MCF 10A (cell line): ENCODE measurements at regions of chr20 and their contacts with region 1.

Region 1: DNA sequence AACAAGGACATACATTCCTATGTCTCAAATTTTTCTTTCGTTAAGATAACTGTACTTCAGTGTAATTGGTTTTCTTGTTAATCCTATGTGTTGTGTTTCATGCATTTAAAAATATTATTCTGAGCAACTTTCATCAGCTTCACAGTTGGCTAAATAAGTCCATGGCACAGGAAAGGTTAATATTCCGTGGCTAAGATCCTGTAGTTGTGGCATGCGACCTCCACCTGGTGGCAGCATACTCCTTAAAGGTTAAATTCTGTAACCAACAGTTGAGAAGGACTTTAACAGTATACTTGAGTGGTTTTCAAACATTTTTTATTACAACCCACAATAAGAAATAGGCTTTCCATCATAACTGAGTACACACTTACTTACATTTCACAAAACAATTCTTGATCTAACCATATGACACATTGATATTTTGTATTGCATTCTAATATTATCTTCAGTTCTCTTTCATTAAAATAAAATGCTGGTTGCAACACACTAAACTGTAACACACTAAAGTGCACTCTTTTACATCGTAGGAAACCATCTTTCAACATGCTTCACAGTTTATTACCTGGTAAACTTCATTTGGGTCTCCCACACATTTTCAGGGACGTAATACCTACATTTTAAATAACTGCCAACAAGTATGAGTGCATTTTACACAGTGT is 118.3 kb downstream of the SLX4IP start:
- DNase-seq: peak; percentile 76
- H3K4me3 Mint-ChIP-seq: no peak overlapping the region
- H3K27ac Mint-ChIP-seq: no peak overlapping the region
- H3K4me1 Mint-ChIP-seq: peaks cover 27% of the 10 kb centered on the region
- H3K27me3 Mint-ChIP-seq: no peaks in the 10 kb centered on the region
- CTCF ChIP-seq: peak; percentile 82

Region 2: DNA sequence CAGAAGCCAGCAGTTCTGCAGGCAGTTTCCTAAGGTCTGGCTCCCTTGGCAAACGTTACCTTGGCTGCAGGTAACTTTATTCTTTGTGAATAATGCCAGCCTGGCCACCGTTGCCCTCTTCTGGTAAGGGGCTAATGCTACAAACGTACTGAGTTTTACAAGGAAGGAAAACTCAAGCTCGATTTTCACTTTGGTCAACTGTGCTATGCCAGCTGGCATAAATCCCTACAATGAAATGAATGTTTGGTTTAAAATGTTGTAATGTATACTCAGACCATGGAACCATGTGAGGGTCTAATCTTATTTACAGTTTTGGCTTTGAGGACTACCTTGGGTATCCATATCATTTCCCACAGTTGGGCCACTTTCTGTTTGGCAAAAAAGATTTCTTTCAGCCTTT is 16.9 kb before region 1 on chr20:
- CTCF ChIA-PET with region 1: interaction called, 20 read pairs
- POLR2A ChIA-PET with region 1: interaction called, 5 read pairs
- intact Hi-C with region 1: no loop called
- DNase-seq: peak; percentile 71
- H3K4me3 Mint-ChIP-seq: no peak overlapping the region
- H3K27ac Mint-ChIP-seq: no peak overlapping the region
- H3K4me1 Mint-ChIP-seq: peaks cover 31% of the 10 kb centered on the region
- H3K27me3 Mint-ChIP-seq: no peaks in the 10 kb centered on the region
- CTCF ChIP-seq: peak; percentile 44

Region 3: GRCh38 chr20:10626896-10627295 is 73.4 kb after region 1 on chr20:
- CTCF ChIA-PET with region 1: interaction called, 14 read pairs
- POLR2A ChIA-PET with region 1: interaction called, 20 read pairs
- intact Hi-C with region 1: no loop called
- DNase-seq: peak; percentile 86
- H3K4me3 Mint-ChIP-seq: no peak overlapping the region
- H3K27ac Mint-ChIP-seq: peak overlapping the region; percentile 27
- H3K4me1 Mint-ChIP-seq: peaks cover 25% of the 10 kb centered on the region
- H3K27me3 Mint-ChIP-seq: no peaks in the 10 kb centered on the region
- CTCF ChIP-seq: no peak

Region 4: GRCh38 chr20:10667077-10667401 is 113.6 kb after region 1 on chr20:
- CTCF ChIA-PET with region 1: interaction called, 35 read pairs
- POLR2A ChIA-PET with region 1: interaction called, 60 read pairs
- intact Hi-C with region 1: loop called (anchors 1 kb)
- DNase-seq: peak; percentile 78
- H3K4me3 Mint-ChIP-seq: peak overlapping the region; percentile 33
- H3K27ac Mint-ChIP-seq: peak overlapping the region; percentile 68
- H3K4me1 Mint-ChIP-seq: peaks cover 46% of the 10 kb centered on the region
- H3K27me3 Mint-ChIP-seq: no peaks in the 10 kb centered on the region
- CTCF ChIP-seq: no peak

Region 5: DNA sequence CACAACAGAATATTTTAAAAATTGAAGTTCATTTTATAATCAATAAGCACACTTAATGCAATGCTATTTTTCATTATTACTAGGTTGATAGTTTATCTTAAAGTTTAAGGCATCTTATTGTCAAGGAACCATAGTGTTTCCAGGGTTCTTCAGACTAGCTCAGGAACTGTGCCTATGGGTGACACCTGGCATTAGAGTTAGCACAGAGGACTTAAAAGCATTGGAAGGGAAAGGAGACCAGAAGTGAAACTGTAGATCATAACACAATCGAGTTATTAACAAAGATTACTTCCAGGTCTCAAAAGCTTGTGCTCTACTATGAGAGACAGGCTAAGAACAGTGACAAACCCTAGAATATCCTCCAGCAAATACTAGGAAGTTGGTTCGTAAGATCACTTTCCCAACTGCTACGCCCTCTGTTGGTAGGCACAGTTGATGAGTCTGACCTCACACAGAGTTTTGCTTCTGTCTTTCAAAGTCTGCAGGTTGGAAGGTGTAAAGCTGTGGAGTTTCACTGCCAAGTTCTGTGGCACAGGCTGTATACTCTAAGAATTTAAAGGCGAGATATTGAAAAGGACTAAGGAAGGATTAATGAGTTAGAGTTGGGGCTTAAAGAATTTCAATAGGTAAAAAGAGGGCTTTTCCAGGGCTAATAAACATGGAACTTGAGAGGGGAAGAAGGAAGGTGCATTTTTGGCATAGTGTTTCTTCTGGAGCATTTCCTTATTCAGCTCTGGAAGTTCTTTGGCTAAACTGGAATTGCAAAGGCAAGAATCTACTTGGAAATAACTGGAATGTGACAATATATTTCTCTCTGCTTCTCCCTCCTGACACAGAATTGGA is 651.7 kb after region 1 on chr20:
- CTCF ChIA-PET with region 1: interaction called, 4 read pairs
- POLR2A ChIA-PET with region 1: interaction called, 3 read pairs
- intact Hi-C with region 1: loop called (anchors 5 kb)
- DNase-seq: peak; percentile 81
- H3K4me3 Mint-ChIP-seq: no peak overlapping the region
- H3K27ac Mint-ChIP-seq: no peak overlapping the region
- H3K4me1 Mint-ChIP-seq: peaks cover 33% of the 10 kb centered on the region
- H3K27me3 Mint-ChIP-seq: no peaks in the 10 kb centered on the region
- CTCF ChIP-seq: peak; percentile 58

Region 6: DNA sequence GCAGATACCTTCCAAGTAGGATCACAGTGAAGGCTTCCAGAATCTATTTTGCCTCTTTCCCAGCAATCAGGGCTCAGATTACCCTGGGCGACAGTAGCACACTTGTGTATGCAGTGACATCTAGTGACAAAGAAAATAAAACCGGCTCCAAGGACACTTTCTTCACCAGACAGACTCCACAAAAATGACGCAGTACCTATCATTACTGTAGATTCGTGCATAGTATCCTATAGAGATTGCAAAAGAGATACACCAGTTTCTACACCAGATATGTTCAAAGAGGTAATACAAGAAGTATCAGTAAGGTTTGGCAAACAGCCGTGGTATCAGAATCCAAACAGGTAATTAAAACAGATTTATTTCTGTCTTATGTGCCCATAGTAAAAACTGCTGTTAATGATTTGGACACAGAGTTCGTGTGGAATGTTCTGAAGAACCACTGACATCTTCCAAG is 720.7 kb after region 1 on chr20:
- CTCF ChIA-PET with region 1: interaction called, 6 read pairs
- POLR2A ChIA-PET with region 1: interaction called, 4 read pairs
- intact Hi-C with region 1: loop called (anchors 1 kb)
- DNase-seq: peak; percentile 78
- H3K4me3 Mint-ChIP-seq: no peak overlapping the region
- H3K27ac Mint-ChIP-seq: peak overlapping the region; percentile 29
- H3K4me1 Mint-ChIP-seq: peaks cover 6% of the 10 kb centered on the region
- H3K27me3 Mint-ChIP-seq: no peaks in the 10 kb centered on the region
- CTCF ChIP-seq: peak; percentile 59

Region 7: DNA sequence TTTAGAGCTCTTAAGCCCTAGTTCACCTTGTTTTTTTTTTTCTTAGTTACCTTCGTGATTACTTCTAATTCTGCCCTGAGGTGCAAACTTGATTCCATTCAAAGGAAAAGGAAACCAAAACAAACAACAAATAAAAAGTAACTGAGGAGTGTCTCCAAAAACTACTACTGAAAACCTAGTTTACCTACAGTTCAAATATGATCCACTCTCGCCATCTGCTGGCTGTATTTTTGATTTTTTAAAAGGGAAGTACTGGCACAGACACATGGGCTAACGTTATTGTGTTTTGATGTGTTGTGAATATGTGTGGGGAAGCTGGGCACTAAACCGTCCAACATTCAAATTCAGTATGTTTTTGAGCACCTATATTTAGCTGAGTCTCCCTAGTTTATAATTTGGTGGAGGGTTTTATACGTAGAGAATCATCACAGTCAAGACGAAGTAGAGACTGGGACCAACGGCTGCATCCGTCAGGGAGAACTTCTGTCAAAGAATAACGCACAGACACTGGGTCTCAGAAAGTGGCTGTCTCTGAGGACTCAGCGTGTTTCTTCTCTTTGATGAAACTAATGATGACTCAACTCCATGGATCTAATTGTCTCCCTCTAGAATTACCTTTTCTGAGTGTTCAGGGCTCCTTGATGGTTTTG is 990.7 kb after region 1 on chr20:
- CTCF ChIA-PET with region 1: interaction called, 19 read pairs
- POLR2A ChIA-PET with region 1: no interaction called
- intact Hi-C with region 1: loop called (anchors 1 kb)
- DNase-seq: peak; percentile 75
- H3K4me3 Mint-ChIP-seq: no peak overlapping the region
- H3K27ac Mint-ChIP-seq: no peak overlapping the region
- H3K4me1 Mint-ChIP-seq: no peaks in the 10 kb centered on the region
- H3K27me3 Mint-ChIP-seq: no peaks in the 10 kb centered on the region
- CTCF ChIP-seq: peak; percentile 73